GM12878 (cell line): ENCODE measurements at regions of chr10 and their contacts with region 1.

Region 1: DNA sequence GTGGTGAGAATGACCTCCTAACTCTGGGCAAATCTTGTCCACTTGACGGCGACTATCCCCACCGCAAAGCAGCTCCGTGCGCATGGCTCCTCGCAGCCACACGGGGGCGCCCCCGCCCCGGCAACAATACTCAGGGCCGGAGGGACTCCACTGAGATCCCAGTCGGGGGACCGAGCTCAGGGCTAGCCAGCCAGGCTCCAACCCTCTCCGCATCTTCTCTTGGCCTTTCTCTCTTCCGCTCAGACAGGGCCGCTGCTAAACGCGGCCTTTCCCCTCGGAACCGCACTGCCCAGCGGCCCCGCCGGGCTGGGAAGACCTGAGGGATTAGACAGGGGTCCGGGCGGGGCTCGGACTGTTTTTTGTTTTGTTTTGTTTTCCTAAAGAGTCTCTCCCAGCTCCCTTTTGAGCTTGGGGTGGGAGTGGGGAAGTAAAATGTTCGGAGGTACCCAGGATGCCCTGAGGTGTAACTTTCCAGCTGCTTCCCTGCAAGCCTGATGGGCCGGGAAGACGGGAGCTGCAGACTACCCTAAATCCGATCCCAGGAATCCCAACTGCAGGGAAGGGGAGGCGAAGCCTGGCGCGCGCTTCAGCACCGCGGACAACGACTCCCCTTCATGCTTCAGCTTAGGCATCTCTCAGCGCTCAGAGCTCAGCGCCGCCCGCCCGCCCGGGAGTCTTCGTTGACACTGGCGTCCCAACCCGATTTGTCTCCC is 2.7 kb downstream of the KCNIP2 start:
- DNase-seq: no peak
- ATAC-seq: peak; percentile 90
- H3K4me3 ChIP-seq: peak overlapping the region; percentile 81
- H3K27ac ChIP-seq: no peak overlapping the region
- H3K4me1 ChIP-seq: peaks cover 23% of the 10 kb centered on the region
- H3K27me3 ChIP-seq: no peaks in the 10 kb centered on the region
- CTCF ChIP-seq: peak; percentile 98 to 99 (median 98); a peak in 5 of 6 replicates
- EP300 ChIP-seq: no peak
- POLR2A ChIP-seq: no peak
- RAD21 ChIP-seq: peak; percentile 98

Region 2: DNA sequence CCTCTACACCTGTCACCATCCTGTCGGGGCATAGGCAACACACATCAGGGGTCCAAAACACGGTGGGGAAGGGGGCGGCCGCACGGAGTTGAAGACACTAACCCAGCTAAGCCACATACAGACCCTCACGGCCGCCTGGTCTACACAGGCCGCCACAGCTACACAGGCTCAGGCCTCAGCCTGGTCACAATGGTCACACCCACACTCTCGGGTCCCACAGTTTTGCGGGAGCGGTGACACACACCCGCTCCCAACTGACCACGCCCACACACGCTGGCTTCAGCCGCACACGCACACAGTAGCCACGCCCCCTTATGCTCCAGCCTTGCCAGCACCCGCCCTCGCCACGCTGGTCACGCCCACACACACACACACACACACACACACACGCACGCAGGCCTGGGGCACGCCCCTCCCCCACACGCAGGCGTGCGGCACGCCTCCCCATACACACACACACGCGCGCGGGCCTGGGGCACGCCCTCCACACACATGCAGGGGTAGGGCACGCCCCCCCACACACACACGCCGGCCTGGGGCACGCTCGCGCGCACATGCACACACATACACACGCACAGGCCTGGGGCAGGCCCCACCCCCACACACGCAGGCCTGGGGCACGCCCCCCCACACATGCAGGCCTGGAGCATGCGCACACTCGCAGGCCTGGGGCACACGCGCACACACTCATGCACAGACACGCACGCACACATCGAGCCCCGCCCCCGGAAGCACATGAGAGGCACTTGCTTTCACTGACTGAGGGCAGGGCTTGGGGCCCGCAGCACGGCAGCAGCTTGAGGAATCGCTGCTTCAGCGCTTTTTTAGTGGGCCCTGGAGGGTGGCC is 10.4 kb before region 1 on chr10:
- CTCF ChIA-PET with region 1: interaction called, 10 read pairs
- POLR2A ChIA-PET with region 1: interaction called, 5 read pairs
- RAD21 ChIA-PET with region 1: interaction called, 15 read pairs
- SMC1A ChIA-PET with region 1: interaction called, 3 read pairs
- in situ Hi-C with region 1: no loop called
- intact Hi-C with region 1: no loop called
- DNase-seq: peak; percentile 81
- ATAC-seq: peak; percentile 87
- H3K4me3 ChIP-seq: peak overlapping the region; percentile 63
- H3K27ac ChIP-seq: peak overlapping the region; percentile 82
- H3K4me1 ChIP-seq: peaks cover 22% of the 10 kb centered on the region
- H3K27me3 ChIP-seq: no peaks in the 10 kb centered on the region
- CTCF ChIP-seq: no peak
- EP300 ChIP-seq: 0 out of 4 replicates have a peak, but pooled peaks have one; percentile 6 to 35
- POLR2A ChIP-seq: peak; percentile 83
- RAD21 ChIP-seq: no peak

Region 3: GRCh38 chr10:101897633-101898032 is 56.7 kb after region 1 on chr10:
- CTCF ChIA-PET with region 1: interaction called, 39 read pairs
- POLR2A ChIA-PET with region 1: interaction called, 4 read pairs
- RAD21 ChIA-PET with region 1: interaction called, 44 read pairs
- SMC1A ChIA-PET with region 1: interaction called, 120 read pairs
- in situ Hi-C with region 1: no loop called
- intact Hi-C with region 1: loop called (anchors 5 kb)
- DNase-seq: no peak
- ATAC-seq: no peak
- H3K4me3 ChIP-seq: no peak overlapping the region
- H3K27ac ChIP-seq: peak overlapping the region; percentile 29
- H3K4me1 ChIP-seq: peaks cover 44% of the 10 kb centered on the region
- H3K27me3 ChIP-seq: no peaks in the 10 kb centered on the region
- CTCF ChIP-seq: no peak
- EP300 ChIP-seq: no peak
- POLR2A ChIP-seq: no peak
- RAD21 ChIP-seq: no peak

Region 4: GRCh38 chr10:101974091-101974971 is 133.4 kb after region 1 on chr10:
- CTCF ChIA-PET with region 1: interaction called, 10 read pairs
- POLR2A ChIA-PET with region 1: no interaction called
- RAD21 ChIA-PET with region 1: interaction called, 12 read pairs
- SMC1A ChIA-PET with region 1: interaction called, 16 read pairs
- in situ Hi-C with region 1: no loop called
- intact Hi-C with region 1: no loop called
- DNase-seq: no peak
- ATAC-seq: no peak
- H3K4me3 ChIP-seq: 0 out of 2 replicates have a peak overlapping the region, but pooled peaks have one; percentile 42
- H3K27ac ChIP-seq: peak overlapping the region; percentile 99
- H3K4me1 ChIP-seq: peaks cover 50% of the 10 kb centered on the region
- H3K27me3 ChIP-seq: no peaks in the 10 kb centered on the region
- CTCF ChIP-seq: no peak
- EP300 ChIP-seq: no peak
- POLR2A ChIP-seq: no peak
- RAD21 ChIP-seq: no peak

Region 5: DNA sequence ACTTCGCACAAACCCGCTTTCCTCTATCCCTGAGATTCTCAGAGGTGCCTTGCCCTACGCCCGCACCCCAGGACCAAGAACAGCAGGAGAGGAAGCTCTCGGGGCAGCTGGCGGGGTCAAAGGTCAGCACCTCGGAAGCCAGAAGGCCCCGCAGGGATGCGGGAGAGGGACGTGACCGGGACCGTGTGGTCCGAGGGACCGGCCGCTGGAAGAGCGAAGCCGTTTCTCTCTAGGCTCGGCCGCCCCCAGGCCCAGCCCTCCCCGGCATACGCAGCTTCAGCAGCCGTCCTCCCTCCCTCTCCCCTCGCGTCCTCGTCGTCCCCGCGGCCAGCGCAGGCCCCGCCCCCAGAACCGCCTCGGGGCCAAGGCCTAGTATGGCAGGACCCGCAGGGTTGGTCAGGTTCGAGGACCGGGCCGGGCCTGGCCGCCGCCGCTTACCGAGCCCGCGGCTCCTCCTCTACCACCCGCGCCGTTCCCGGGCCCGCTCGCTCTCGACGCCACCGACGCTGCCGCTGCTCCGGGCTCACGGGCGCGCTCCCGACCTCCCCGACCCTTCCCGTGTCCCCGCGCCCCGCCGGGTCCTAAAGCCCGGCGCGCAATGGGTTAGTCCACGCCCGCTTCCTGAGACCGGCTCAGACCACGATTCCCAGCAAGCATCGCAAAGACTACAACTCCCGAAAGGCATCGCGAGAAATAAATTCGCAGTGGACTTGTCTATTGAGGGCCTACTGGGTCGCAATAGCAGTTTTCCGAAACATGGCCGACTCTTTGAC is 214.9 kb after region 1 on chr10 and contains the start of gene ARMH3:
- CTCF ChIA-PET with region 1: interaction called, 12 read pairs
- POLR2A ChIA-PET with region 1: interaction called, 4 read pairs
- RAD21 ChIA-PET with region 1: interaction called, 10 read pairs
- SMC1A ChIA-PET with region 1: interaction called, 8 read pairs
- in situ Hi-C with region 1: no loop called
- intact Hi-C with region 1: no loop called
- DNase-seq: peak; percentile 87
- ATAC-seq: peak; percentile 98
- H3K4me3 ChIP-seq: peak within 1 kb of the TSS; percentile 93
- H3K27ac ChIP-seq: peak within 1 kb of the TSS; percentile 77
- H3K4me1 ChIP-seq: 0 out of 2 replicates have a peak, but pooled peaks cover 9% of the 10 kb centered on the region
- H3K27me3 ChIP-seq: no peaks in the 10 kb centered on the region
- CTCF ChIP-seq: no peak
- EP300 ChIP-seq: no peak
- POLR2A ChIP-seq: peak; percentile 83
- RAD21 ChIP-seq: no peak
- polyA plus RNA-seq, gene ARMH3: 13.6 to 14.0 TPM

Region 6: GRCh38 chr10:102114861-102115618 is 274.1 kb after region 1 on chr10:
- CTCF ChIA-PET with region 1: interaction called, 3 read pairs
- POLR2A ChIA-PET with region 1: no interaction called
- RAD21 ChIA-PET with region 1: interaction called, 8 read pairs
- SMC1A ChIA-PET with region 1: no interaction called
- in situ Hi-C with region 1: no loop called
- intact Hi-C with region 1: loop called (anchors 5 kb)
- DNase-seq: no peak
- ATAC-seq: peak; percentile 82
- H3K4me3 ChIP-seq: peak overlapping the region; percentile 82
- H3K27ac ChIP-seq: peak overlapping the region; percentile 84
- H3K4me1 ChIP-seq: peaks cover 43% of the 10 kb centered on the region
- H3K27me3 ChIP-seq: no peaks in the 10 kb centered on the region
- CTCF ChIP-seq: no peak
- EP300 ChIP-seq: no peak
- POLR2A ChIP-seq: peak; percentile 92
- RAD21 ChIP-seq: no peak

Region 7: DNA sequence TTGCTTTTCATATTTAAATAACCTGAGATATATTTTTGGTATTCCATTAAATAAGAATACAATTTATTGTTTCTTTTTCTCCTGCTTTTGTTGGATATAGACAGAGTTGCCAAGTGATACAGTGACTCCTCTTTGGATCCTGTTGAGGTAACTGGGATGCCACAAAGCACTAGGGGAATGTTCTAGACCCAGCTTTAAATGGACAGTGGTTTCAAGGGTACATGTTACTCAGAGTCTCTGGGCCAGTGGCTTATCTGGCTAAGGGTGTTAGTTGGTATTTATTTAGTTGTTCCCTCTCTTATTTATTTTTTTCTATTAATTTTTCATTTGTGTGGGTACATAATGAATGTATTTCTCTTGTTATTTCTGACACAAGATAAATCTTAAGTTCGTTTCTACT is 413.5 kb after region 1 on chr10:
- CTCF ChIA-PET with region 1: no interaction called
- POLR2A ChIA-PET with region 1: no interaction called
- RAD21 ChIA-PET with region 1: no interaction called
- SMC1A ChIA-PET with region 1: no interaction called
- in situ Hi-C with region 1: no loop called
- intact Hi-C with region 1: no loop called
- DNase-seq: no peak
- ATAC-seq: no peak
- H3K4me3 ChIP-seq: no peak overlapping the region
- H3K27ac ChIP-seq: no peak overlapping the region
- H3K4me1 ChIP-seq: 0 out of 2 replicates have a peak, but pooled peaks cover 4% of the 10 kb centered on the region
- H3K27me3 ChIP-seq: no peaks in the 10 kb centered on the region
- CTCF ChIP-seq: no peak
- EP300 ChIP-seq: no peak
- POLR2A ChIP-seq: no peak
- RAD21 ChIP-seq: no peak